ENCODE measurements at regions of chr11 and their contacts with region 1.

Region 1: GRCh38 chr11:117127171-117127901 is 16.8 kb upstream of the PAFAH1B2 start:
- DNase-seq: no peak
- ATAC-seq: no peak
- H3K4me3 ChIP-seq: no peak overlapping the region
- H3K27ac ChIP-seq: no peak overlapping the region
- H3K4me1 ChIP-seq: no peaks in the 10 kb centered on the region
- H3K27me3 ChIP-seq: peaks cover 2% of the 10 kb centered on the region; the same call in 1 of the 2 replicates
- CTCF ChIP-seq: no peak

Region 2: GRCh38 chr11:115224551-115224950 is 1902.8 kb before region 1 on chr11:
- CTCF ChIA-PET with region 1: no interaction called
- POLR2A ChIA-PET with region 1: interaction called, 11 read pairs
- in situ Hi-C with region 1: no loop called
- intact Hi-C with region 1: no loop called
- DNase-seq: no peak
- ATAC-seq: no peak
- H3K4me3 ChIP-seq: no peak overlapping the region
- H3K27ac ChIP-seq: no peak overlapping the region
- H3K4me1 ChIP-seq: no peaks in the 10 kb centered on the region; the same call in 1 of the 2 replicates
- H3K27me3 ChIP-seq: no peaks in the 10 kb centered on the region
- CTCF ChIP-seq: no peak

Region 3: GRCh38 chr11:116948391-116948790 is 178.9 kb before region 1 on chr11:
- CTCF ChIA-PET with region 1: no interaction called
- POLR2A ChIA-PET with region 1: no interaction called
- in situ Hi-C with region 1: no loop called
- intact Hi-C with region 1: no loop called
- DNase-seq: no peak
- ATAC-seq: peak; percentile 81
- H3K4me3 ChIP-seq: no peak overlapping the region
- H3K27ac ChIP-seq: no peak overlapping the region
- H3K4me1 ChIP-seq: peaks cover 11% of the 10 kb centered on the region
- H3K27me3 ChIP-seq: no peaks in the 10 kb centered on the region
- CTCF ChIP-seq: no peak

Region 4: GRCh38 chr11:117143871-117144476 is 16.6 kb after region 1 on chr11 and contains the start of gene PAFAH1B2:
- CTCF ChIA-PET with region 1: interaction called, 13 read pairs
- POLR2A ChIA-PET with region 1: interaction called, 3 read pairs
- in situ Hi-C with region 1: no loop called
- intact Hi-C with region 1: no loop called
- DNase-seq: peak; percentile 81
- ATAC-seq: peak; percentile 98
- H3K4me3 ChIP-seq: peak within 1 kb of the TSS; percentile 97 to 100
- H3K27ac ChIP-seq: peak within 1 kb of the TSS; percentile 100
- H3K4me1 ChIP-seq: peaks cover 18% of the 10 kb centered on the region
- H3K27me3 ChIP-seq: no peaks in the 10 kb centered on the region
- CTCF ChIP-seq: no peak
- total RNA-seq, gene PAFAH1B2: 179 TPM